AG04449 (cell line): ENCODE measurements at regions of chr15 and their contacts with region 1.

Region 1: DNA sequence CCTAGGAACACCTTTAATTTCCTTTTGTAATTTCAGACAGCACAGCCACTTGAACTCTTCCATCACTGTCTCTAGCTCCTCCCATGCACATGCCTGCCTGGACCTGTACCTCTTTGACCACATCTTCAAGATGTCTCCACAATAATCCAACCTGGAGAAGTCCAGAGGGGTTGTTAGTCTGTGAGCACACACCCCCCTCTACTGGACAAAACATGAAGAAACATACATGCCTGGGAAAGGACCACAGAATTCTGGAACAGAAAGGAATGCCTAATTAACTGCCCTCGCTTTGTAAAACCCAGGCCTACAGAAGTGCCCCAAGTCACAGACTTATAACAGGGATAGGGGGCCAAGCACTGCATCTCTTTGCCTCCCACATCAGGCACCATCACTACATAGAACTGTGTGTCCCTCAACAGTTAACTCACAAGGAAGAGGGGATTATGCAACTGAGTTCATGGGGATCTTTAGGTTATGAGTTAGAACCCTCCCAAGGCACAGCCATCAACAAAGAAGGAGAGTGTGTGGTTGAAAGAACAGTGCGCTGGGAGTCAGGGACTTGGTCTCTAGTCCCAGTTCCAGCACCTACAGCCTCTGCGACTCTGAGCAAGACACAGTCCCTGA is 61.7 kb downstream of the FMN1 start:
- DNase-seq: no peak
- H3K4me3 ChIP-seq: no peak overlapping the region
- CTCF ChIP-seq: peak; percentile 61

Region 2: DNA sequence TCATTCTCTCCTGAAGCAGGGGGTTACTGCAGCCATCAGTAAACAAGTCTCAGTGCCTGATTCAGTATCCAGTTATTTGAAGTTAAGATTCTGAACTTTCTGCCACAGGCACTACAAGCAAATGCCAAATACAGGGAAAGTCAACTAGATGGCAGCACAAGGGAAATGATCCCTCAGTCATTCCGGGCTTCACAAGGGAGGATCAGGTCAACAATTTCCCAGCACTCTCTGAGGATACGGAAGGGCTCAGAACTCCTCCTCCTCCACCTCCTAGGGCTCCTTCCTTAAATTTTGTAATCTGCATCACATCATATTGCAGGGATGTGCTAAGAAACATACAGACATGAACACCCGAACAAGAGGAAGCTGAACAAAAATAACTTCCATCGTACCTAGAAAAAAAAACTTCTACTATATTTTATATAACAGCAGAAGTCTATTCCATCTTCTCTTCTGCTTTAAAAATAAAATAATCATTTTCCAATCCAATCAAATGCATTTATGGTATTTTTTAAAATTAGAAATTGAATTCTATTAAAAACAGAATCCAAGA is 125.5 kb before region 1 on chr15:
- CTCF ChIA-PET with region 1: interaction called, 20 read pairs
- POLR2A ChIA-PET with region 1: no interaction called
- DNase-seq: no peak
- H3K4me3 ChIP-seq: no peak overlapping the region
- CTCF ChIP-seq: peak; percentile 13

Region 3: DNA sequence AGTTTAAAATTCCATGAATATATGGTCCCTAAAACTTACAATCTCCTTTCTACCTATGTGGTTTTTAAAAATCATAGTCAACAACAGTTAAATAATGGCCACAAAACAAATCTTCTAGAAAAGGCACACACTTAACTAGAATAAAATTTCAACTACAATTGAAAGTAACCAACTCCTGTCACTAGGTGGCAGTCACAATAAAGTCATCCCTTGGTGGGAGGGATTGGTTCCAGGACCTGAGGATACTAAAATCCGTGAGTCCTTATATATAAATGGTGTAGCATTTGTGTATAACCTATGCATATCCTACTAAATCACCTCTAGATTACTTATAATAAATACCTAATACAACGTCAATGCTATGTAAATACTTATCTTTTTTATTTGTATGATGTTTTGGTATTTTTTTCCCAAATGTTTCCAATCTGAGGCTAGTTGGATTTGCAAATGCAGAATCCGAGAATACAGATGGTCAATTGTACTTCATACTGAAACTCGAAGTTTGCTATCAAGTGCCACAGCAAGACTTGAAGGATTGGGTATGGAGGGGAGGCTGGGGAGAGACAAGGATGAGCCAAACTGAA is 110.9 kb before region 1 on chr15:
- CTCF ChIA-PET with region 1: interaction called, 76 read pairs
- POLR2A ChIA-PET with region 1: no interaction called
- DNase-seq: no peak
- H3K4me3 ChIP-seq: no peak overlapping the region
- CTCF ChIP-seq: peak; percentile 58

Region 4: GRCh38 chr15:33067941-33068481 is 64.8 kb before region 1 on chr15:
- CTCF ChIA-PET with region 1: interaction called, 16 read pairs
- POLR2A ChIA-PET with region 1: interaction called, 3 read pairs
- DNase-seq: no peak
- H3K4me3 ChIP-seq: peak overlapping the region; percentile 59
- CTCF ChIP-seq: no peak

Region 5: DNA sequence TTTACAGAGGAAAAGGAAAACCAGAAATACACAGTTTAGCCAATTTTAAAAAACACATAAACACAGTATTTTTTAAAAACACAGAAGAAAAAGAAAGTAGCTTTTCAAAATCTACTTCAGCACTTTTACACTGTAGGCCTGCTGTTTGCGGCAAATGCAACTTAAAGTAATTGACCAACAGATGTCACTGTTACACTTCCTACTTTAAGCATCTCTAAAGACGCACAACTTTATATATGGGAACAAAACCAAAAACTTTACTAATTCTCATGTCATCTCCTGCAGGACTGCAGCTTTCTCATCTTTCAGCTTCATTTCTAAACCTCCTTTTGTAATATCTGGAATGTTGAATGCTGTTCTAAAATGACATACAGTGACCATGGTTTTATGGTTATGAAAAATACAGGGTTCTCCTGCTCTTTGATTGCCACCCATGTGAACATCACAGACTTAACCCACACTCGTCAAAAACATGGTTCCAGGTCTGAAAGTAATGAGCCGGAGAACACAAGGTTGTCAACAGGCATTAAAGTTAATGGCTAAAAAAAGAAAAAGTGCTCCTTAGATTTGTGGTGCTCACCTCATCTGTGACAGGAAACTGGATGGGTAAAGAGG is 46.2 kb before region 1 on chr15:
- CTCF ChIA-PET with region 1: interaction called, 813 read pairs
- POLR2A ChIA-PET with region 1: interaction called, 4 read pairs
- DNase-seq: no peak
- H3K4me3 ChIP-seq: no peak overlapping the region
- CTCF ChIP-seq: peak; percentile 51

Region 6: GRCh38 chr15:33547876-33548275 is 415.0 kb after region 1 on chr15:
- CTCF ChIA-PET with region 1: no interaction called
- POLR2A ChIA-PET with region 1: no interaction called
- DNase-seq: no peak
- H3K4me3 ChIP-seq: no peak overlapping the region
- CTCF ChIP-seq: no peak